ENCODE measurements at regions of chr1 and their contacts with region 1.

Region 1: DNA sequence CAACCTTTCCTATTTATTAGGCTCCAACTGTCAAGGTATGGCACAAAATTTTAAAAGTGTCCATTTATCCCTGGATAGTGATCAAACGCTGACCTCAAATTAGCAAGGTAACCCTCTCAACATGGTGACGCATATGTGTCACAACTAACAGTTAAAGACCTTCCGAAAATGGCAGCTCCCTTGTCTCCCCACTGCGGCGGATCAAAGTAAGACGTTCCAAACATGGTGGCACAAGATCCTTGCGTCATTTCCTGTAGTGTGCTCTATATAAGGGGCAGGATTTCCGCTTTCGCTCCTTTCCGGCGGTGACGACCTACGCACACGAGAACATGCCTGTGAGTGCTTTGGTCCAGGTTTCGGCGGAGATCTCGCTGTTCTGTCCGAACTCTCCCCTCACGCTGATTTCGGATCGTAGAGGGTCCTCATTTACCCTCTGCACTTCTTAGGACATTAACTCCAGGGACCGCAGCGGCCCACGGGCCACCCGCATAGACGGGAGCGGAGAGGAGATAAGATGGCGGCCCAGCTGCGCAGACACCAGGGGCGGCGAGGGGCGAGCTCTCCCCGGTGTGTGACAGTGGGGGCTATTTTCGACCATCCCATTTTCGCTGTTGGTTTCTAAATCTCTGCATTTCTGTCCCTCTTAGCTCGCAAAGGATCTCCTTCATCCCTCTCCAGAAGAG is at the start of gene RPS27:
- DNase-seq: peak; percentile 95
- H3K4me3 ChIP-seq: peak within 1 kb of the TSS; percentile 72 to 77
- H3K27ac ChIP-seq: peak within 1 kb of the TSS; percentile 88 to 93
- H3K4me1 ChIP-seq: peaks cover 3% of the 10 kb centered on the region
- H3K27me3 ChIP-seq: no peaks in the 10 kb centered on the region
- CTCF ChIP-seq: peak in 2 of 4 experiments; percentile 23 to 31
- POLR2A ChIP-seq: peak; percentile 91
- total RNA-seq, gene RPS27: 1,937 to 3,992 TPM

Region 2: DNA sequence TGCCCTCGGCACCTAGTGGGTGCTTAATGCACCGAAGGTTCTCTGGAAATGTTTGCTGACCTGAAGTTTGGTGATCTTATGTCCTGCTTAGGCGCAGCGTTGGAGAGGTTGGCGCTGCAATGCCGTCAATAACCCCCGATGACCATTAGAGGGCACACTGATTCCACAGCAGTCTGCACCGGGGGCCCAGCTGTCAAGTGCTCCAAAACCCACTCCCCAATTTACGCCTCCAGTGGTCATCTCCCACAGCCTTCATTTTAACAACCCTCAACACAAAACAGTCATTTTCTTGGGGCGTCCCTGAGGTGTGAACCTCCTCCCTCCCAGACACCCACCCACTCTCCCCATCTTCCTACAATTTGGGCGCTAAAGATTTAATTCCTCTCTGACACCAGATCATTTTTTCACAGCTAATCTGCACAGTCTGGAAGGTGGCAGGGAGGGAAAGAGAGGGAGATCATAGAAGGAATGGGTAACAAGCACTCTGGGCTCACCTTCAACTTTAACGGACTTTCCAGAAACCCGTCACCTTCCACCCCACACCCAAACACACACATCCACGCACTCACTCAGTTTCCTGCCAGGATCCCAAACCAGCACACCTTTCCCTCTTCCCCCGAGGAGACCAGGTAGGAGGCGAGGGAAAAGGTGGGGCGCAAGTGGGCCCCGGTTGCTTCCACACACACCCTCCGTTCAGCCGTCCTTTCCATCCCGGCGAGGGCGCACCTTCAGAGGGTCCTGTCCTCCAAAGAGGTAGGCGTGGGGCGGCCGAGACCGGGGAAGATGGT is 312.7 kb before region 1 on chr1:
- intact Hi-C with region 1: loop called (anchors 5 kb)
- DNase-seq: peak; percentile 38
- H3K4me3 ChIP-seq: peak overlapping the region; percentile 24 to 33
- H3K27ac ChIP-seq: no peak overlapping the region
- H3K4me1 ChIP-seq: no peaks in the 10 kb centered on the region
- H3K27me3 ChIP-seq: no peaks in the 10 kb centered on the region
- CTCF ChIP-seq: peak; percentile 48 to 75 (median 65)
- POLR2A ChIP-seq: no peak

Region 3: DNA sequence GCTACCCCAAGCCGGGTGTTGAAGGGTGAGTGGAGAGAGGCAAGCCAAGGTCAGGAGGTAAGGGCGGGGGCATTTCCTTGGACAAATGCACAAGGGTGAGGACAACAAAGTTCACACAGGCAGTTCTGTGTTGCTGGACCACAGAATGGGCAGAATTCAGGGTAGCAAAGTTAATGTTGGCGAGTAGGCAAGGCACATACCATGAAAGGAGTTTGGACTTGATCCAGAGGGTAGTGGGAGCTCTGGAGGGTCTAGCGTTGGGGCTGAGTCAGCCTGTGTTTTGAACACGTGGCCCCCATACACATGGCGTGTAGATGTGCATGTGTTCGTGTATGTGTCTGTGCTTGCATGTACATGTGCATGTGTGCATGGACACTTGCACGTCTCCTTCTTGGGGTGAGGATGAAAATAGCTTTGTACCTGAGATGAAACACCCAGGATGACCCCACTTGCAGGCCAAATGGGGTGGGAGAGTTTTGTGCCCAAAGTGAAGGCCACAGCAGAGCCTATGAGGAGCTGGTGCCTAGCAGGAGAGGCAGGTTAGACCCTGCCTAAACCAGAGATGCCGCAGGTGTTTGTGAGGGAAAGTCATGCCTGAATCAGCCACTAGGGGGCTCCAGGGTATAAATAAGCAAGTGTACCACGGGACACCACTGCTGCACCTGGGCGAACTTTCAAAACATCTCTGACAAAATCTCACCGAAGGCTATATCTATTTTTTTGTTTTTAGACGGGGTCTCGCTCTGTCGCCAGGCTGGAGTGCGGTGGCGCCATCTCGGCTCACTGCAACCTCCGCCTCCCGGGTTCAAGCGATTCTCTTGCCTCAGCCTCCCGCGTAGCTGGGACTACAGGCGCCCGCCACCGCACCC is 193.6 kb before region 1 on chr1:
- intact Hi-C with region 1: loop called (anchors 5 kb)
- DNase-seq: peak; percentile 85
- H3K4me3 ChIP-seq: no peak overlapping the region
- H3K27ac ChIP-seq: no peak overlapping the region
- H3K4me1 ChIP-seq: no peaks in the 10 kb centered on the region
- H3K27me3 ChIP-seq: no peaks in the 10 kb centered on the region
- CTCF ChIP-seq: peak; percentile 90 to 93 (median 91)
- POLR2A ChIP-seq: no peak

Region 4: DNA sequence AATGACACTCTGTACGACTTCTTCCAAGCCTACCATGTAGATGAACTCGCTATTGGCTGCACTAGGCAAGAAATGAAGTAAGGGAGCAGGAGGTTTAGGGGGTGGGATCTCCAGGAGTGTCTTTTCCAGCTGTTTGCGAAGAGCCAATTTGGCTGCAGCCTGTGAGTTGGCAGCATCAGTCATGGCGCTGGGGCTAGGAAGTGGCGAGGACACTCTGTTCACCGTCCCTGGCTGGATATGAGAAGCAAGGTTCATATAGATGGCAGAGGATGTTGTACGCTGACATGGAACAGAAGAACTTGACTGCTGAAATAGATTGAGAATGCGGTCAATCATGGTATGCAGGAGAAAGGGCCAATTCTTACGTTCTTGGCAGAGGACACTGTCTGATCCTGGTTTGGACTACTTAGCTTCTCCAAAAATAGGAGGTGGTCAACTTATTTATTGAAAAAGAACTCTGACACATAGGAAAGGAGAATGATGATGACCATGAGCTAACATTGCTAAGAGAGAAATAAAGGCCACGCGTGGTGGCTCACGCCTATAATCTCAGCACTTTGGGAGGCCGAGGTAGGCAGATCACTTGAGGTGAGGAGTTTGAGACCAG is 174.2 kb before region 1 on chr1:
- intact Hi-C with region 1: loop called (anchors 2 kb)
- DNase-seq: no peak
- H3K4me3 ChIP-seq: no peak overlapping the region
- H3K27ac ChIP-seq: no peak overlapping the region
- H3K4me1 ChIP-seq: no peaks in the 10 kb centered on the region
- H3K27me3 ChIP-seq: no peaks in the 10 kb centered on the region
- CTCF ChIP-seq: no peak
- POLR2A ChIP-seq: no peak

Region 5: DNA sequence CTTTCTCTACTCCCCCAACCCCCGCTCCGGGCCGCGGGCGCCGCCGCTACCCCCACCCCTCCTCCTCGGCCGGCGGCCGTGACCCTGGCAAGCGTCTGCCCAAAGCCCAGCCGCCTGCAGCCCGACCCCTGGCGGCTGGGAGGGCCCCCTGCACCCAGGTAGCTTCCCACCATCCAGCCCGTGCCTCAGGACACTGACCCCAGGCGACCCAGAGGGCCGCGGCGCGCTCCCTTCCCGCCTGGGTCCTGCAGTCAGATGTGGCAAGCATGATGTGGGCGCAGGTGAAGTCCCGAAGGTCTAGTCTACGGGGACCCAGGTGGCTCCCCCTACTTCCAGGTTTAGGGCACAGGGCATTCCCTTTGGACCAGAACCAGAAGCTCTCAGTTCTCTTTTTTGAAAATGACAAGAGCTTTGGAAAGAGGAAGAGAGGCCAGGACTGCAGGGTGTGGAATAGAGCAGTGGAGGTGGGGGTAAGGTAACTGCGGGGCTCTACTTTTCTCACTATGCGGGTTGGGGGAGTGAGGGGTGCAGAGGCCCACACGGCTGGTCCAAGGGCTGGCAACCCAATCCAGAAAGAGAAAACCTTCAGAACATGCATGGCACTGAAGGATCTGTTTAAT is 43.9 kb before region 1 on chr1 and contains the start of gene DENND4B:
- intact Hi-C with region 1: loop called (anchors 5 kb)
- DNase-seq: peak; percentile 71
- H3K4me3 ChIP-seq: peak within 1 kb of the TSS; percentile 92 to 95
- H3K27ac ChIP-seq: peak within 1 kb of the TSS; percentile 92 to 96
- H3K4me1 ChIP-seq: no peaks in the 10 kb centered on the region
- H3K27me3 ChIP-seq: no peaks in the 10 kb centered on the region
- CTCF ChIP-seq: peak; percentile 92 to 93 (median 93)
- POLR2A ChIP-seq: no peak
- total RNA-seq, gene DENND4B: 18.1 to 28.3 TPM

Region 6: DNA sequence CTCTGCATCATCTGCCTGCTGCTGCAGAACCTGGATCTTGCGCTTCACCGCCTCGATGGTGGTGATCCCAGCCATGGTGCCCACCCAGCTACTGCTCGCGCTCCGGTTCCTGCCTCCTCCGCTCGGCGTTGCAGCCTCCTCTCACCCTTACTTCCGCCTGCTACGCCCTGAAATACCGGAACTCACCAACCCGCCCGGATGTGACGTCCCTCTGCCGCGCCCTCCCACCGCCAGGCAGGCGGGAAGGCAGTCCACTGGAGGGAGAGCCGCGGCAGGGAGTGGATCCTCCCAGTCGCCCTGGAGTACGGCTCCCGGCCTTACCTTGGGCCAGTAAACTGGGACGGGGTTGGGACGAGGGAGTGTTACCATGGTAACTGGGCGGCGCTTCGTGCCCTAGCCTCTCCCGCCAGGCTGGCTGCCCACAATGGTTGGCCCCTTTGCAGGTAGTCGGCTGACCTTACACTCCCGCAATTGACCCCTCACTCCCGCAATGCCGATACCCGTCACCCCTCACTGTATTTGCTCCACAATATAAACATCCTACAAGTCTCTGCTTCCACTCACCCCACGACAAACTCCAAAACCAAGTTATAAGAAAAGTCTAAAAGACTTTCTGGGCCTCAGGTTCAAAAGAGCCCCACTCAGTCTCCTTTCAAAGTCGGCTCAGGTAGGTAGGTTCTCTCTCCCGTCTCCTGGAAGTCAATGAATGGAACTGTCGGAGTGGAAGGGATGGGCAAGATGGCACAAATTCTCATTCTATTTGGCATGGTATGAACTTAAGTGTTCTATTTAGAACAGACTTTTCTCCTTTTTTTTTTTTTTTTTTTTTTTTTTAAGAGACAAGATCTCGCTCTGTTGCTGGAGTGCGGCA is 192.7 kb after region 1 on chr1:
- intact Hi-C with region 1: loop called (anchors 10 kb)
- DNase-seq: peak; percentile 96
- H3K4me3 ChIP-seq: peak overlapping the region; percentile 58 to 89
- H3K27ac ChIP-seq: peak overlapping the region; percentile 86 to 87
- H3K4me1 ChIP-seq: no peaks in the 10 kb centered on the region
- H3K27me3 ChIP-seq: no peaks in the 10 kb centered on the region
- CTCF ChIP-seq: peak in 3 of 4 experiments; percentile 11 to 65 (median 51)
- POLR2A ChIP-seq: peak; percentile 100

Region 7: GRCh38 chr1:154896771-154897391 is 906.3 kb after region 1 on chr1:
- intact Hi-C with region 1: no loop called
- DNase-seq: no peak
- H3K4me3 ChIP-seq: no peak overlapping the region
- H3K27ac ChIP-seq: no peak overlapping the region
- H3K4me1 ChIP-seq: no peaks in the 10 kb centered on the region
- H3K27me3 ChIP-seq: no peaks in the 10 kb centered on the region
- CTCF ChIP-seq: no peak
- POLR2A ChIP-seq: no peak